ENCODE measurements at regions of chr18 and their contacts with region 1.

Region 1: GRCh38 chr18:24315170-24315569 is 82.5 kb downstream of the OSBPL1A start:
- DNase-seq: no peak
- H3K4me3 ChIP-seq: no peak overlapping the region
- H3K27ac ChIP-seq: no peak overlapping the region
- H3K4me1 ChIP-seq: peaks cover 7% of the 10 kb centered on the region
- H3K27me3 ChIP-seq: no peaks in the 10 kb centered on the region
- CTCF ChIP-seq: no peak

Region 2: GRCh38 chr18:24293254-24293653 is 21.9 kb before region 1 on chr18:
- CTCF ChIA-PET with region 1: no interaction called
- POLR2A ChIA-PET with region 1: no interaction called
- intact Hi-C with region 1: loop called (anchors 2 kb)
- DNase-seq: no peak
- H3K4me3 ChIP-seq: no peak overlapping the region
- H3K27ac ChIP-seq: no peak overlapping the region
- H3K4me1 ChIP-seq: no peaks in the 10 kb centered on the region
- H3K27me3 ChIP-seq: no peaks in the 10 kb centered on the region
- CTCF ChIP-seq: no peak

Region 3: GRCh38 chr18:24475926-24476589 is 160.9 kb after region 1 on chr18:
- CTCF ChIA-PET with region 1: no interaction called
- POLR2A ChIA-PET with region 1: no interaction called
- intact Hi-C with region 1: no loop called
- DNase-seq: no peak
- H3K4me3 ChIP-seq: no peak overlapping the region
- H3K27ac ChIP-seq: no peak overlapping the region
- H3K4me1 ChIP-seq: no peaks in the 10 kb centered on the region
- H3K27me3 ChIP-seq: no peaks in the 10 kb centered on the region
- CTCF ChIP-seq: no peak